ENCODE measurements at regions of chr6 and their contacts with region 1.

Region 1: GRCh38 chr6:110398778-110399177 is 16.6 kb downstream of the DDO start:
- DNase-seq: peak in 1 of 2 experiments; percentile 6
- H3K4me3 ChIP-seq: no peak overlapping the region
- H3K27ac ChIP-seq: no peak overlapping the region
- H3K4me1 ChIP-seq: no peaks in the 10 kb centered on the region
- H3K27me3 ChIP-seq: no peaks in the 10 kb centered on the region
- CTCF ChIP-seq: no peak

Region 2: DNA sequence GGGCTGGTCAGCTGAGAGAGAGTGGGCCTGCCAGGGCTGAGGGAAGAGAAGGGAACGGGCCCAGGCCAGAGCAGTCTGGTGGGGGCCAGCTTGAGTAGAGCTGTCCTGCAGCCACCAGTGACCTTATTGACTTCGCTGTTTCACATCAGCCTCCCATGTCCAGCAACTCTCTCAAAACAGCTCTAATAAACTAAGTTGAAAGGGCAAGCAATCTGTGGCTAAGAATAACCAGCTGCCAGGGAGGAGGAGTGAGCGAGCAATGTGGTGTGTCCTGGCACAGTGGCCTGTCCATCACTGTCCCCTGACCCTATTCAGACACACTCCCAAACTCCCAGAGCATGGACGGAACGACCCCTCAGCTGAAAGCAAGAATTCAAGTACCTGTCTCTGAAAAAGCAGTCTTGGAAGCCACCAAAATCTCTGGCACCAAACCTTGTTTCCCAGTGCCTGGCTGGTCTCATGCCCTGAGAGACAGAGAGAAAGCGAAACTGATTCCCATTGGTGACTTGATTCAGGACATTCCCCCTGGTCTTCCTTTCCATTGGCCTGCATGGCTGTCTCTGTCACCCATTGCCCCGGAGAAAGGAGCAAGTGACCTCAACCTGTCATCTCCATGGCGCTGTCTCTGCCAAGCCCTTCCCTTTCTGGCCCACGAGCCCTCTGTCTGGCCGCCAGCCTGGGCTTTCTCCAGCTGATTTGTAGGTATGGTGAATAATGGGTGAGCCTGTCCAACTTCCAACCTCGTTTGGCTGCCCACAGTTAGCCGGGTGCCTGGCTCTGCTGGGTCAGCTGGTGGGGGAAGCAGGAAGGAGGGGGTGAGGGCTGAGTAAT is 16.5 kb after region 1 on chr6 and contains the start of gene DDO:
- CTCF ChIA-PET with region 1: no interaction called
- POLR2A ChIA-PET with region 1: no interaction called
- intact Hi-C with region 1: no loop called
- DNase-seq: peak in 1 of 2 experiments; percentile 61
- H3K4me3 ChIP-seq: no peak within 1 kb of the TSS
- H3K27ac ChIP-seq: no peak within 1 kb of the TSS
- H3K4me1 ChIP-seq: no peaks in the 10 kb centered on the region
- H3K27me3 ChIP-seq: peaks cover 5% of the 10 kb centered on the region; the same call in 1 of the 2 replicates
- CTCF ChIP-seq: no peak
- total RNA-seq, gene DDO: 2.0 and 3.6 TPM in 2 replicates

Region 3: DNA sequence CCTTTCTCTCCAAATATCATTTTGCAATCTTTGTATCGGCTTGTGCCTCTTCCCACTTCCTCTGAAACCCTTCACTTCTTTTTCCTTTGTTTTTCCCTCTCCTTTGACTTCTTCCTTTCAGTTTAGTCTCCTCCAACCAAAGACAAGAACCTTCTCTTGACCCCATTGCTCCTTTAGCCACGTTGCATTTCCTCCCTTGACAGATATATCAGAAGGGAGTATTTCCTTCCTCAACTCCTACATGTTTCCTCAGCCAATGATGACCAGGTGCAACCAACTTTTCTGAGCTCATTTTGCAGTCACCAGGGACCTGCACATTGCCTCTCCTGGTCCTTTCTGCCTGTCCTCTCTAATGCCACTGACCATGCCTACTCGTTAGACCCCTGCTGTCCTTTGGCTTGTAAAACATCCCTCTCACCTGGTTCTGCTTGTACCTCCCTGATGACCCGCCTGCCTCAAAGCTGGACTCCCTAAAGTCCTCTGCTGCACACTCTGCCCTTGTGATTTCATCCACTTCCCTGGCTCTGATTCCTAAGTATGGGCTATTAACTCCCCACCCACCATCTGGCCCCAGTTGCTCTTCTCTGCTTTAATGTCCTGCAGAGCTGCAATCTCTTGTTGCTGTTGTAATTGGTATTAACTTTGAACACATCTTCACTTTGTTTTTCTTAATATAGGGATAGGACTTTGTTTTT is 50.2 kb after region 1 on chr6:
- CTCF ChIA-PET with region 1: no interaction called
- POLR2A ChIA-PET with region 1: no interaction called
- intact Hi-C with region 1: no loop called
- DNase-seq: no peak
- H3K4me3 ChIP-seq: no peak overlapping the region
- H3K27ac ChIP-seq: no peak overlapping the region
- H3K4me1 ChIP-seq: no peaks in the 10 kb centered on the region
- H3K27me3 ChIP-seq: peaks cover 17% of the 10 kb centered on the region; the same call in 1 of the 2 replicates
- CTCF ChIP-seq: no peak

Region 4: GRCh38 chr6:110661426-110661825 is 262.6 kb after region 1 on chr6:
- CTCF ChIA-PET with region 1: no interaction called
- POLR2A ChIA-PET with region 1: interaction called, 11 read pairs
- intact Hi-C with region 1: no loop called
- DNase-seq: peak in 1 of 2 experiments; percentile 44
- H3K4me3 ChIP-seq: no peak overlapping the region
- H3K27ac ChIP-seq: no peak overlapping the region
- H3K4me1 ChIP-seq: peaks cover 34% of the 10 kb centered on the region
- H3K27me3 ChIP-seq: no peaks in the 10 kb centered on the region
- CTCF ChIP-seq: no peak

Region 5: DNA sequence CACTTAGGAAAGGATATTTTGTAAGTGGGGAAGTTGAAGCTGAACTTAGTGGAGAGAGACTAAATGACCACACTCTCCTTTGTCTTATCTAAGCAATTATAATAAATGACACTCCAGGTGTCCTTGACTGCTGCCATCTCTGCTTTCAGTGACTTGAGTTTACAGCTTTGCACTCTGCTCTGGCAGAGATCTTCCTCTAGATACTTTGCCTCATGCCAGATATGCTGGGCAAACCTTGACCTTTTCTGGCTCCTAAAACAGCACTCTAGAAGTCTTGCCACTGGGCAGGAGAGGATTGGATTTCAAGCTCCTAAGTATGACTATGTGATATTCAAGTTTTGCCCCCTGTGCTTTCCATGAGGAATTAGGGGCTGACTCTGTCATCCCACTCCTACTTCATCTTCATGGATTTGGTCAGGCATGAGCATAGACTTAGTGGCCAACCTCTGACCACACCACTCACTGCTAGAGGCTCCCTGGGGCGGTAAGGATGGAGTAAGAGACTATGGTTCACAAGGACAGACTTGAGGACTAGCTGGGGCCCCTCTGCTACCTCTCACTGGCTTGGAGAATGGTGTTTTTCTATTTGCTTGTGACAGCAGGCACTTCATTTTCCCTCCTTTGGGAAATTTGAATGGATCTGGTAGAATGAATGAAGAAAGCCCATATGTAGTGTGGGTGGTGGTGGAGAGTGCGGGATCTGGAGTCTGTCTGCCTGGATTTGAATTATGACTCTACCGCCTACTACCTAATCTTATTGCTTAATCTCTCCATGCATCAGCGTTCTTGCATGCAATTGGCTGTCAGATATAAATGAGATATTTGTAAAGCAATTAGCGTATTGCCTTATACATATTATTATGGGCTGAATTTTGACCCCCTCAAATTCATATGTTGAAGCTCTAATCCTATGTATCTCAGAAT is 892.8 kb after region 1 on chr6:
- CTCF ChIA-PET with region 1: no interaction called
- POLR2A ChIA-PET with region 1: no interaction called
- intact Hi-C with region 1: no loop called
- DNase-seq: peak in 1 of 2 experiments; percentile 29
- H3K4me3 ChIP-seq: no peak overlapping the region
- H3K27ac ChIP-seq: no peak overlapping the region
- H3K4me1 ChIP-seq: no peaks in the 10 kb centered on the region
- H3K27me3 ChIP-seq: no peaks in the 10 kb centered on the region
- CTCF ChIP-seq: no peak

Measured in PC-9 (cell line).